Right ventricle myocardium inferior (tissue), 1 donor: ENCODE measurements at regions of chr5 and their contacts with region 1.

Region 1: GRCh38 chr5:892394-893136 is at the starts of genes BRD9 and TRIP13:
- DNase-seq: peak; percentile 93
- ATAC-seq: peak; percentile 94
- total RNA-seq, gene BRD9: 27.9 TPM
- total RNA-seq, gene TRIP13: 0.38 TPM

Region 2: DNA sequence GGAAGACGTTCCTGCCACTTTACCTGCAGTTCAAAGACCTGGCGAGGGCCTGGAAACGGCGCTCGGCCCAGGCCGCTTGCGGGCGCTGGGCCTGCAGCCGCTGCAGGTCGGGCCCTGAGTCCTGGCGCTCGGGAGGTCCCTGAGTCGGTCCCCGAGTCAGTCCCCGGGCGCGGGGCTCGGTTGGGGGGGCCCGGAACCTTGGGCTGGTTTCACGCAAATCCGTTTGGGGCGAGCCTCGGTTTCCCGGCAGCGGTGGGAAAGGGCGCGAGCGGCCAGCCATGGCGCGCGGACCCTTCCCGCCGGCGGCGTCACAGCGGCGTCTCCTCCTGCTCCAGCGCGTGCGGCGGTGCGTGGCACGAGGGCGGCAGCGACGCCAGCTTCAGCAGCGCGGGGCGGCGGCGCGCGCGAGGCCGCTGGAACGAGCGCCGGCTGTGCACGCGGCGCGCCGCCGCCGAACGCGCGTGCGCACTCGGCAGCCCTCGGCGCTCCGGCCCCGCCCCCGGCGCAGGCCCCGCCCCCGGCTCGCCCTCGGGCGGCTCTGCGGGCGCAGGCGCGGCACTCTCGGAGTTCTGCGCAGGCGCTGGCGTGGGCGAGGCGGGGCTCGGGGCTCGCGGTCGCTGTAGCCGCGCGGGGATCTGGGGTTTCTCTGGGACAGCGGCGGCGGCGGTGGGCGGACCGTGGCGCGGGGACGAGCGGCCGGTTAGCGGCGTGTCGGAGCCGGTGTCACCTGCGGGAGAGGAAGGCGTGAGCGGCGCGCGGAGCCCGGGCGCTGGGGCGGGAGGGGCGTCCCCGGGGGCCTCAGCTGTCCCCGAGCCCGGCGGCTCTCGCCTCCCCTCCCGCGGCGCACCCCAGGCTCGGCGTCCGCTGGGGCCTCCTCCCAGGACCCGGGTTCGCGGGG is 419.7 kb before region 1 on chr5:
- intact Hi-C with region 1: loop called (anchors 5 kb)
- DNase-seq: peak; percentile 94
- ATAC-seq: peak; percentile 90

Region 3: DNA sequence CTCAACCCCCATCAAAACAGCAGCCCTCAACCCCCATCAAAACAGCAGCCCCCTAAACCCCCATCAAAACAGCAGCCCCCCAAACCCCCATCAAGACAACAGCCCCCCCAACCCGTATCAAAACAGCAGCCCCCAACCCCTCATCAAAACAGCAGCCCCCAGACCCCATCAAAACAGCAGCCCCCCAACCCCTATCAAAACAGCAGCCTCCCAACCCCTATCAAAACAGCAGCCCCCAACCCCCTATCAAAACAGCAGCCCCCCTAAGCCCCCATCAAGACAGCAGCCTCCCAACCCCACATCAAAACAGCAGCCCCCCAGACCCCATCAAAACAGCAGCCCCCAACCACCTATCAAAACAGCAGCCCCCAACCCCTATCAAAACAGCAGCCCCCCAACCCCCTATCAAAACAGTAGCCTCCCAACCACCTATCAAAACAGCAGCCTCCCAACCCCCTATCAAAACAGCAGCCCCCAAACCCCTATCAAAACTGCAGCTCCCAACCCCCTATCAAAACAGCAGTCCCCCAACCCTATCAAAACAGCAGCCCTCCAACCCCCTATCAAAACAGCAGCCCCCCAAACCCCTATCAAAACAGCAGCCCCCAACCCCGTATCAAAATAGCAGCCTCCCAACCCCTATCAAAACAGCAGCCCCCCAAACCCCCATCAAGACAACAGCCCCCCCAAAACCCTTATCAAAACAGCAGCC is 200.6 kb before region 1 on chr5:
- intact Hi-C with region 1: loop called (anchors 5 kb)
- DNase-seq: no peak
- ATAC-seq: no peak

Region 4: GRCh38 chr5:801472-801871 is 91.1 kb before region 1 on chr5:
- intact Hi-C with region 1: no loop called
- DNase-seq: no peak
- ATAC-seq: peak; percentile 42

Region 5: GRCh38 chr5:855771-856530 is 36.6 kb before region 1 on chr5:
- intact Hi-C with region 1: no loop called
- DNase-seq: no peak
- ATAC-seq: no peak